Endothelial cell of umbilical vein (primary cell): ENCODE measurements at regions of chr10 and their contacts with region 1.

Region 1: DNA sequence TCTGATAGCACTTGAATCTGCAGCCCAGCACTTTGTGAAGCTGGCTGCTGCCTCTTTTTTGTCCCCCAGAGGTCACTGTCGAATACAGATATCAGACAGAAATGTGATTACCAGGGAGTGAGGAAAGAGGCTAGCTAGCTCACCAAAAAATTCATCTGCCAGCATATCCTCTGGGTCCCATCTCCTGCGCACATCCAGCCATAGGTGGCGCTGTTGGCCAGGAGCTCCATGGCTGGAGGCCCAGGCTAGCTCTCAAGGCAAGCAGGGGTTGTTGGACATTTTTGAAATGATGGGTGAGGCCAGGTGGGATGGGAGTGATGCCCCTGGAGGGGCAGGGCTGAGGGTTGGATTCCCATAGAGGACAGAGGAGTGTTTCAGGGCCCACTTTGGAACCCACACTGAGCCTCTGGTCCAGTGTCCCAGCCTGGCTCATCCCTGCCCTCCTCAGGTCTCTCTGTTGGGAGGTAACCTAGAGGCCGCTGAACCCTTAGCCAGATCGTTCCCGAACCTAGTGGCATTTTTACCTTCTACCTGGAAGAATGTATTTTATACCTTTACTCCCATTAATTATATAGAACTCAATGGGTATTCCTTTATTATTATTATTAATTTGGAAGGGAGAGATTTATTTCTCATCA is 14.8 kb downstream of the DPCD start:
- DNase-seq: peak; percentile 56
- H3K4me3 ChIP-seq: no peak overlapping the region
- H3K27ac ChIP-seq: no peak overlapping the region
- H3K4me1 ChIP-seq: no peaks in the 10 kb centered on the region
- H3K27me3 ChIP-seq: no peaks in the 10 kb centered on the region
- CTCF ChIP-seq: peak; percentile 82 to 95
- POLR2A ChIP-seq: no peak

Region 2: DNA sequence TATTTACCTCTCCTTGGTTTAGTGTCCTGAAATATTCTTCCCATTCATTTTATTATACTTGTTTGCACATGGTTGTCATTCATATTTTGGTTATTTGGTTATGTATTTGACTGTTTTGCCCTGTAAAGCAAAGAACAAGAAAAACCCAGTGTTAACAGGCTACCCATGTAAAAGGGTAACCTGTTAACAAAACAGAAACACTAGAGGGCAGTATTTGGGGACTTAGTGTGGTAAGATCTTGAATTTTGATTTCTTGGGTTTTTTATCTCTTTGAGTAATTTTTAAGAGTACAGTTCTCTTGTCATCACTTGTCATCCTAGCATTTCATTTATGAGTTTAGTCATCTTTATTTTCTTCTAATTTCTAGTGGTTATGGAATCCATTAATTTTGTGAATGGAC is 66.1 kb before region 1 on chr10:
- CTCF ChIA-PET with region 1: no interaction called
- POLR2A ChIA-PET with region 1: no interaction called
- dilution Hi-C with region 1: no loop called
- intact Hi-C with region 1: no loop called
- DNase-seq: peak; percentile 18
- H3K4me3 ChIP-seq: no peak overlapping the region
- H3K27ac ChIP-seq: no peak overlapping the region
- H3K4me1 ChIP-seq: peaks cover 15% of the 10 kb centered on the region
- H3K27me3 ChIP-seq: no peaks in the 10 kb centered on the region
- CTCF ChIP-seq: peak; percentile 20 to 31
- POLR2A ChIP-seq: no peak

Region 3: DNA sequence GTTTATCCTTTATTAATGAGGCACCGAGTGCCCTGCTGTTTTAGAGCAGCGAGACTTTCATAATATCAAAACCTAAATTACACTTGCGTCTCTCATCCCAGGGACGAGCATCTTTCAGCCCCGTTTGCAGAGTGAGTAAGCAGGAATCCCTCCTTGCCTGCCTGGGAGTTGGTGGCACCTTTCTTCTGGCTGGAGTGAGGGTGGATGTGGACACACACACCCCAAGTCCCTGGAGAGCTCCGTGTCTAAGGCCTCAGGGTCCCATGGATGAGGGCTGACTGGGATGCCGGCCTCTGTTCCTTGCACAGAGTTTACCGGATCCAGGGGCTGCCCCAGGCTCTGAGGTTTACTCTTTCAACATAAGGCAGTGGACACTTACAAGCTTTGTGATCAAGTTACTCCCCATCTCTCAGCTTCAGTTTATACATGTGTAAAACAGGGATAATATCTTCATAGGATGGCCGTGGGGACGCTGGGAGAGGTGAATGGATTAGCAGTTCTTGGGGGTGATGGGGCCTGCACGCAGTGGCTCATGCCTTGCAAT is 39.3 kb before region 1 on chr10:
- CTCF ChIA-PET with region 1: no interaction called
- POLR2A ChIA-PET with region 1: no interaction called
- dilution Hi-C with region 1: no loop called
- intact Hi-C with region 1: loop called (anchors 1 kb)
- DNase-seq: no peak
- H3K4me3 ChIP-seq: no peak overlapping the region
- H3K27ac ChIP-seq: no peak overlapping the region
- H3K4me1 ChIP-seq: no peaks in the 10 kb centered on the region
- H3K27me3 ChIP-seq: peaks cover 20 to 23% of the 10 kb centered on the region in 2 experiments
- CTCF ChIP-seq: no peak
- POLR2A ChIP-seq: no peak

Region 4: GRCh38 chr10:101617102-101617823 is 14.4 kb after region 1 on chr10:
- CTCF ChIA-PET with region 1: interaction called, 19 read pairs
- POLR2A ChIA-PET with region 1: no interaction called
- dilution Hi-C with region 1: no loop called
- intact Hi-C with region 1: no loop called
- DNase-seq: no peak
- H3K4me3 ChIP-seq: no peak overlapping the region
- H3K27ac ChIP-seq: no peak overlapping the region
- H3K4me1 ChIP-seq: no peaks in the 10 kb centered on the region
- H3K27me3 ChIP-seq: no peaks in the 10 kb centered on the region
- CTCF ChIP-seq: no peak
- POLR2A ChIP-seq: no peak

Region 5: GRCh38 chr10:101759309-101760247 is 156.7 kb after region 1 on chr10:
- CTCF ChIA-PET with region 1: interaction called, 12 read pairs
- POLR2A ChIA-PET with region 1: no interaction called
- dilution Hi-C with region 1: no loop called
- intact Hi-C with region 1: no loop called
- DNase-seq: no peak
- H3K4me3 ChIP-seq: no peak overlapping the region
- H3K27ac ChIP-seq: no peak overlapping the region
- H3K4me1 ChIP-seq: no peaks in the 10 kb centered on the region
- H3K27me3 ChIP-seq: peaks cover 3 to 15% of the 10 kb centered on the region in 2 experiments
- CTCF ChIP-seq: no peak
- POLR2A ChIP-seq: no peak

Region 6: GRCh38 chr10:102072673-102073527 is 470.0 kb after region 1 on chr10:
- CTCF ChIA-PET with region 1: interaction called, 14 read pairs
- POLR2A ChIA-PET with region 1: no interaction called
- dilution Hi-C with region 1: no loop called
- intact Hi-C with region 1: loop called (anchors 10 kb)
- DNase-seq: peak; percentile 81
- H3K4me3 ChIP-seq: no peak overlapping the region
- H3K27ac ChIP-seq: no peak overlapping the region
- H3K4me1 ChIP-seq: no peaks in the 10 kb centered on the region
- H3K27me3 ChIP-seq: peaks cover 0 to 2% of the 10 kb centered on the region in 2 experiments
- CTCF ChIP-seq: peak; percentile 91 to 98
- POLR2A ChIP-seq: no peak